PC-3 (cell line): ENCODE measurements at regions of chr12 and their contacts with region 1.

Region 1: GRCh38 chr12:34126239-34126641 is 103.9 kb downstream of the ALG10 start:
- DNase-seq: peak; percentile 16
- ATAC-seq: peak; percentile 64
- H3K4me3 ChIP-seq: peak overlapping the region; percentile 51
- H3K27ac ChIP-seq: no peak overlapping the region
- H3K4me1 ChIP-seq: no peaks in the 10 kb centered on the region; the same call in 1 of the 2 replicates
- H3K27me3 ChIP-seq: no peaks in the 10 kb centered on the region
- CTCF ChIP-seq: no peak

Region 2: GRCh38 chr12:34186492-34186891 is 60.3 kb after region 1 on chr12:
- CTCF ChIA-PET with region 1: no interaction called
- POLR2A ChIA-PET with region 1: no interaction called
- intact Hi-C with region 1: loop called (anchors 2 kb)
- DNase-seq: peak; percentile 33
- ATAC-seq: peak; percentile 46; the same call in 1 of the 2 replicates
- H3K4me3 ChIP-seq: no peak overlapping the region
- H3K27ac ChIP-seq: no peak overlapping the region
- H3K4me1 ChIP-seq: no peaks in the 10 kb centered on the region
- H3K27me3 ChIP-seq: no peaks in the 10 kb centered on the region
- CTCF ChIP-seq: peak; percentile 40; the same call in 1 of the 2 replicates